ENCODE measurements at regions of chr17 and their contacts with region 1.

Region 1: GRCh38 chr17:62860907-62861848 is 53.1 kb upstream of the MARCHF10 start:
- DNase-seq: no peak
- ATAC-seq: no peak
- H3K4me3 ChIP-seq: no peak overlapping the region
- H3K27ac ChIP-seq: no peak overlapping the region
- H3K4me1 ChIP-seq: no peaks in the 10 kb centered on the region
- H3K27me3 ChIP-seq: no peaks in the 10 kb centered on the region

Region 2: DNA sequence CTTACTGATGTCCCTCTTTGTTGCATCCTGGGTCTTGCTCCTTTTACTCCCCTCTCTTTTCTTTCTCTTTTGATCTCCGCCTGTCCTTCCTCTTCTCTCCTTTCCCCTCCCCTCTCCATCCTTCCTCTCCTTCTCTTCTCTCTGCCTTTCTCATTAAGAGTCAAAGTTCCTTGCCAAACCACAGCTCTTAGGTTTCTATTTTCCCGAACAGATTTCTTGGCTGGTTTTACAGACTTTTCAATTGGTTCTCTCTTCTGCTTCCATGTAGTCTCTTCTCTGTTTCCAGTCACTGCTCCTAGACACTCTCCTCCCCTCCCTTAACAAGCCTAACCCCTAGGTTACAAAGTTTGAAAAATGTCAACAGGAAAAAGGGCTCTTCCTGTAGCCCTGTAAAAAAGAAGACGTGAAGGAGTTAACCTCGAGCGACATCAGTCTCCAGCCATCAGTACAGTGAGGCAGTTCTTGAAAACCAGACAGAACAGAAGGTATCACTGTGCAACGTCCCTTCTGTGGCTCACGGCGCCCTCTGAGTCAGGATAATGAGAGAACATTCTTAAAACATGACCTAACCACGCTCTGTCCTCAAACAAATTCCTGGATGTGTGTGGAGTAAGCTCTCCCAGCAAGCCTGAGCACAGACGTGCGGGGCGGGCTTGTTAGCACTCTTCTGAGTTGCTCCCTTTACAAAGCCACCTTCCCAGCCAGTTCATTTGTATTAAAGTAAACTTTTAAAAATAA is 41.5 kb before region 1 on chr17:
- intact Hi-C with region 1: loop called in 1 of 2 experiments (anchors 5 kb)
- DNase-seq: peak; percentile 83 to 85
- ATAC-seq: peak; percentile 93
- H3K4me3 ChIP-seq: no peak overlapping the region
- H3K27ac ChIP-seq: peak overlapping the region; percentile 73 to 84
- H3K4me1 ChIP-seq: peaks cover 0 to 14% of the 10 kb centered on the region in 2 donors
- H3K27me3 ChIP-seq: no peaks in the 10 kb centered on the region

Region 3: GRCh38 chr17:63503334-63503692 is 642.1 kb after region 1 on chr17:
- intact Hi-C with region 1: no loop called
- DNase-seq: no peak
- ATAC-seq: no peak
- H3K4me3 ChIP-seq: no peak overlapping the region
- H3K27ac ChIP-seq: no peak overlapping the region
- H3K4me1 ChIP-seq: no peaks in the 10 kb centered on the region
- H3K27me3 ChIP-seq: no peaks in the 10 kb centered on the region

Measured in aorta (tissue), 5 donors.